Adrenal gland (tissue), 19 donors: ENCODE measurements at regions of chr6 and their contacts with region 1.

Region 1: DNA sequence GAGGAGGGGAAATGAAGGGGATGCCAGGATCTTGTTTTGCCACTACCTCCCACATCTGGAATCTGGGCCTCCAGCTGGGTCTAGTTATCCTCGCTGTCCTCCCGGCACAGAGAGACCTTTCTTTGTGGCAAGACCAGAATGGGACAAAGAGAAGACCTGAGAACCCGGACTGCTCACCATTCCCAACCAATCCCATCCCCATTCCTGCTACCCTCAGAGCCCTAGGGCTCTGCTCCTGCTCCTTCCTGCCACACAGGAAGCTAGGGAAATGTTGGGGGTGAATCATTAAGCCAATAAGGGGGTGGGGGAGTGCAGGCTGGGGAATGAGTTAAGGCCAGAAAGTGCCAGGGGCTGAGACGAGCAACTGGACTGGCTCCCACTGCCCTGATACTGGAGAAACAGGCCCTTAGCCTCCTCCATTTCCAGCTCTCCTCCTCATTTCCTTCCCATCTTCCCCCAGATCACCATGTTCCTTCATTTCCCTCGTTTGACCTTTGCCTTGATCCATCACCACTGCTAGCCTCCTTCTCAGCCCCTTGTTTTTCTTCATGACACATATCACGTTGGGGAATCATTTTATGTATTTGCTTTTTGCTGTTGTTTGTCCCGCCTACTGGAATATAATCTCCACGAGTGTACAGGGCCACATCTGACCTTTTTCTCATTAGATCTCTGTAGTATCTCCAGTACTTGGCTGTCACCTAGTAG is 4.7 kb upstream of the IER3 start:
- DNase-seq: no peak
- H3K4me3 ChIP-seq: no peak overlapping the region
- H3K27ac ChIP-seq: no peak overlapping the region
- H3K4me1 ChIP-seq: peaks cover 17 to 38% of the 10 kb centered on the region in 2 donors
- H3K27me3 ChIP-seq: no peaks in the 10 kb centered on the region
- CTCF ChIP-seq: no peak
- POLR2A ChIP-seq: no peak

Region 2: GRCh38 chr6:30781743-30782424 is 32.9 kb after region 1 on chr6:
- intact Hi-C with region 1: loop called in 1 of 2 experiments (anchors 5 kb)
- DNase-seq: peak; percentile 98 to 99 (median 99)
- H3K4me3 ChIP-seq: no peak overlapping the region
- H3K27ac ChIP-seq: peak overlapping the region; percentile 87 to 98 (median 93)
- H3K4me1 ChIP-seq: peaks cover 30 to 55% of the 10 kb centered on the region in 2 donors
- H3K27me3 ChIP-seq: no peaks in the 10 kb centered on the region
- CTCF ChIP-seq: no peak
- POLR2A ChIP-seq: peak in 1 of 2 donors; percentile 60

Region 3: DNA sequence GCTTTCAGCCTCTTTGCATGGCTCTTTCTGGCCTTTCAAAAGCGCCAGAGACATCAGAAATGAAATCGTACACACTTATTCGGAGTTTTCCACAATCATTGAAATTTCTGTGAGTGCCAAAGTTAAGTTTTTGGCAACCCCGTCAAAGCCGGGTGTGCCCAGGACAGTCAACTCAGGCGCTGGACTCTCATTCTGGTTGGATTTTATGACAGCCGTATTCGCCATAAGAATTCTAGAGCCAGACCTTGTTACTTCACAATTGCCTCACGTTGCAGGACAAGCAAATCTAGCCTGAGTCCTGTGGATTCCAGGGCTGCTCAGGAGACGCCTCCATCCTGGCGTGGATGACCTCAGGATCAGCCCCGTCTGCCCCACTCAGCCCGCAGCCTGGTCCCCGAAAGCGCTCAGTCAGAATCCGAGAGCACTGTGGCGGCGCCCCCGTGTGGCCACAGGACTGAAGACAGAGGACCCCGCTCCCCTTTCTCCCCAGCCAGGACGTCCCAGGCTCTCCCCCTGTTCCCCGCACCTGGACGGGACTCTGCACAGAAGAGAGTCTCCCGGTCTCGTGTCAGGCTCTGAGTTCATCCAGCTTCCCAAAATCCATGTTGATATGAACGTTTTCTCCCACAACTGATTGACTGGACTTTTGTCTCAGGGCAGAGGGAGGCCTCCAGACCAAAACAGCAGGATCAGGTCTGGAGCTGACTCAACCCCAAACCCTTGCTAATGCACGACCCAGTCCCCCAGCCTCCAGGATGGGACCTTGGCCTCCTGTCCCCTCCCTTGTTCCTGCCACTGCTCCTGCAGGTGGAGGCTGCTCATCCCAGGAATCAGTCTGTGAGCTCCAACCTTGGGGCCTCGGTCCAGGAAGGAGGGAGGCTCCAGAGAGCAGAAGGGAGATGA is 692.6 kb after region 1 on chr6:
- intact Hi-C with region 1: no loop called
- DNase-seq: peak; percentile 77 to 89 (median 85)
- H3K4me3 ChIP-seq: no peak overlapping the region
- H3K27ac ChIP-seq: no peak overlapping the region
- H3K4me1 ChIP-seq: no peaks in the 10 kb centered on the region
- H3K27me3 ChIP-seq: no peaks in the 10 kb centered on the region
- CTCF ChIP-seq: peak; percentile 69 to 89 (median 83)
- POLR2A ChIP-seq: no peak